Activated B cell treated with CpG ODN at 0.5 μM for 24 hours (primary cell): ENCODE measurements at regions of chr19 and their contacts with region 1.

Region 1: GRCh38 chr19:36687214-36688056 is at the start of gene ZNF567:
- DNase-seq: peak; percentile 95
- ATAC-seq: peak; percentile 93
- H3K4me3 Mint-ChIP-seq: peak within 1 kb of the TSS; percentile 98
- H3K27ac Mint-ChIP-seq: peak within 1 kb of the TSS; percentile 89
- H3K4me1 Mint-ChIP-seq: peaks cover 34% of the 10 kb centered on the region
- H3K27me3 Mint-ChIP-seq: no peaks in the 10 kb centered on the region
- CTCF ChIP-seq: no peak
- total RNA-seq, gene ZNF567: 13.3 and 15.0 TPM in 2 replicates

Region 2: DNA sequence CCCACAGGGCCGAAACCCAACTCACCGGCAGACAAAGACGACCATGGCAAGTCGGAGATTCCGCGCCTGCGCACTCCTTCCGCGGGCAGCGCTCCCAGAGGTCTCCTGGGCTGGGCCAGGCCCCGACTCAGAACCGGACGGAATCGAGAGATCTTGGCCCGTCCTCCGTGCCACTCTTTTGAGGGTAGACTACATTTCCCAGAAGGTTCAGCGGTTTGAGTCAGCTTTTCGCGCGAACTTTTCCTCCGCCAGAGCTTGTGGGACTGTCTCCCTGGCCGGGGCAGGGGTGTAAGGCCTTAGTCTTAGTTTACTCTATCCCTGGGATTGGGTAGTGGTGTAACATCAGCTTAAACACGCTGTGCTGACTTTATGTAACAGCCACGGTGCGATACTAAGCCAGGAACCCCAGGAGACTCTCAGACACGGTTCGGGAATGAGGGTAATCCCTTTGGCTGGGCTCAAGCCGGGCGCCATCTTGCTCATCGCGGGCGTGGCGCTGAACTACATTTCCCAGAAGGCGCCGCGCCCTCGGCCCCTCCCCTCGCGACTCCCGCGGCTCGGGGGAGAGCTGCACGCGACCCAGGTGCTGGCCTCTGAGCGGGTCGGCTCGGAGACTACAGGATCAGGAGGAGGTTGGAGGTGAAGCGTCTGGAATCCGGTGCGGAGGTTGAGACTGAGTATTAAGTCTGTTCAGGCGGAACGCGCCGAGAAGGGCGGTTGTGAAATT is 159.1 kb before region 1 on chr19 and contains the start of gene ZNF260:
- CTCF ChIA-PET with region 1: no interaction called
- POLR2A ChIA-PET with region 1: no interaction called
- intact Hi-C with region 1: loop called (anchors 1 kb)
- DNase-seq: peak; percentile 94
- ATAC-seq: peak; percentile 89
- H3K4me3 Mint-ChIP-seq: peak within 1 kb of the TSS; percentile 99
- H3K27ac Mint-ChIP-seq: peak within 1 kb of the TSS; percentile 99
- H3K4me1 Mint-ChIP-seq: peaks cover 27% of the 10 kb centered on the region
- H3K27me3 Mint-ChIP-seq: no peaks in the 10 kb centered on the region
- CTCF ChIP-seq: no peak
- total RNA-seq, gene ZNF260: 9.8 and 13.6 TPM in 2 replicates

Region 3: DNA sequence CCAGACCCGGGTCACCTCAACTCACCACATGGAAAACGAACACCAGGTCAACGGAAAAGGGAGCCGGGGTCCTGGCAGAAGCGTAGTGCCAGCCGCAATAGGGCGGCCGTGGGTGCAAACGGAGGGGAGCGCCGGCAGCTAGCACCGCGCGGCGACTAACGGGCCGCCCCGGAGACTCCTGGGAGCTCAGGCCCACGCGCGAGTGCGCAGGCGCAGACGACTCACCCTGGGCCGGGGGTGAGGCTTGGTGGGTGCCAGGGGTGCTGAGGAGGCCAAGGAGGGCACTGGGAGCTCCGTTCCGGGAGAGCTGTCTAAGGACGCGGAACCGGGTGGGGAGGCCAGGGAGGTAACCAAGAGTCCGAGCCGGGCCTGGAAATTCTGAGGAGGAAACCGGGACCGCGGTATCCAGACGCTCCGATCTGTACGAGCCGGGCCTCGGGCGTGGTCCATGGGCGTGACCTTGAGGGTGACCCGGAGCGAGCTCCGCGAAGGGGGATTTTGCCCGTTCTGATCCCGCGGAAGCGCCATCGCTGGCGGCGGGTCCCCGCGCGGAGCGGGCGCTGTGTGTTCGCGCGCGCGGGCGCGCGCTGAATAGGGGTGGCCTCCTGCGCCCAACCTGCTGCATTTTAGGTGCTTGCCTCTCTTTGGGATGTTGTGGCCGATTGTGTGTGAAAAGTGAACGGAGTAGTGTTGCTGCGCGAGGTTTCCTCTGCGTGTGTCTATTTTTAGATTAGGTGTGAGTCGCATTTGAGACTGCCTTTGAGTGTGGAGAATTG is 82.1 kb before region 1 on chr19 and contains the start of gene ZNF382:
- CTCF ChIA-PET with region 1: no interaction called
- POLR2A ChIA-PET with region 1: interaction called, 7 read pairs
- intact Hi-C with region 1: loop called (anchors 1 kb)
- DNase-seq: peak; percentile 85
- ATAC-seq: peak; percentile 80
- H3K4me3 Mint-ChIP-seq: peak within 1 kb of the TSS; percentile 97
- H3K27ac Mint-ChIP-seq: peak within 1 kb of the TSS; percentile 97
- H3K4me1 Mint-ChIP-seq: peaks cover 28% of the 10 kb centered on the region
- H3K27me3 Mint-ChIP-seq: no peaks in the 10 kb centered on the region
- CTCF ChIP-seq: no peak
- total RNA-seq, gene ZNF382: 11.5 and 14.4 TPM in 2 replicates

Region 4: GRCh38 chr19:36674201-36674600 is 13.2 kb before region 1 on chr19:
- CTCF ChIA-PET with region 1: no interaction called
- POLR2A ChIA-PET with region 1: no interaction called
- intact Hi-C with region 1: no loop called
- DNase-seq: no peak
- ATAC-seq: no peak
- H3K4me3 Mint-ChIP-seq: no peak overlapping the region
- H3K27ac Mint-ChIP-seq: no peak overlapping the region
- H3K4me1 Mint-ChIP-seq: peaks cover 2% of the 10 kb centered on the region
- H3K27me3 Mint-ChIP-seq: no peaks in the 10 kb centered on the region
- CTCF ChIP-seq: no peak

Region 5: GRCh38 chr19:36772311-36773222 is 85.1 kb after region 1 on chr19 and contains the start of gene ZNF850:
- CTCF ChIA-PET with region 1: no interaction called
- POLR2A ChIA-PET with region 1: interaction called, 5 read pairs
- intact Hi-C with region 1: loop called (anchors 2 kb)
- DNase-seq: peak; percentile 89
- ATAC-seq: peak; percentile 92
- H3K4me3 Mint-ChIP-seq: peak within 1 kb of the TSS; percentile 92
- H3K27ac Mint-ChIP-seq: peak within 1 kb of the TSS; percentile 85
- H3K4me1 Mint-ChIP-seq: peaks cover 24% of the 10 kb centered on the region
- H3K27me3 Mint-ChIP-seq: no peaks in the 10 kb centered on the region
- CTCF ChIP-seq: no peak
- total RNA-seq, gene ZNF850: 5.8 and 7.9 TPM in 2 replicates

Region 6: GRCh38 chr19:36973021-36973843 is 285.8 kb after region 1 on chr19:
- CTCF ChIA-PET with region 1: no interaction called
- POLR2A ChIA-PET with region 1: no interaction called
- intact Hi-C with region 1: loop called (anchors 1 kb)
- DNase-seq: peak; percentile 75
- ATAC-seq: peak; percentile 97
- H3K4me3 Mint-ChIP-seq: peak overlapping the region; percentile 98
- H3K27ac Mint-ChIP-seq: peak overlapping the region; percentile 94
- H3K4me1 Mint-ChIP-seq: peaks cover 10% of the 10 kb centered on the region
- H3K27me3 Mint-ChIP-seq: no peaks in the 10 kb centered on the region
- CTCF ChIP-seq: peak; percentile 38